ENCODE measurements at regions of chr19 and their contacts with region 1.

Region 1: GRCh38 chr19:55301459-55302317 is 17.9 kb downstream of the BRSK1 start:
- DNase-seq: no peak
- H3K4me3 ChIP-seq: no peak overlapping the region; the same call in 1 of the 2 replicates
- H3K27me3 ChIP-seq: no peaks in the 10 kb centered on the region
- CTCF ChIP-seq: peak; percentile 95

Region 2: DNA sequence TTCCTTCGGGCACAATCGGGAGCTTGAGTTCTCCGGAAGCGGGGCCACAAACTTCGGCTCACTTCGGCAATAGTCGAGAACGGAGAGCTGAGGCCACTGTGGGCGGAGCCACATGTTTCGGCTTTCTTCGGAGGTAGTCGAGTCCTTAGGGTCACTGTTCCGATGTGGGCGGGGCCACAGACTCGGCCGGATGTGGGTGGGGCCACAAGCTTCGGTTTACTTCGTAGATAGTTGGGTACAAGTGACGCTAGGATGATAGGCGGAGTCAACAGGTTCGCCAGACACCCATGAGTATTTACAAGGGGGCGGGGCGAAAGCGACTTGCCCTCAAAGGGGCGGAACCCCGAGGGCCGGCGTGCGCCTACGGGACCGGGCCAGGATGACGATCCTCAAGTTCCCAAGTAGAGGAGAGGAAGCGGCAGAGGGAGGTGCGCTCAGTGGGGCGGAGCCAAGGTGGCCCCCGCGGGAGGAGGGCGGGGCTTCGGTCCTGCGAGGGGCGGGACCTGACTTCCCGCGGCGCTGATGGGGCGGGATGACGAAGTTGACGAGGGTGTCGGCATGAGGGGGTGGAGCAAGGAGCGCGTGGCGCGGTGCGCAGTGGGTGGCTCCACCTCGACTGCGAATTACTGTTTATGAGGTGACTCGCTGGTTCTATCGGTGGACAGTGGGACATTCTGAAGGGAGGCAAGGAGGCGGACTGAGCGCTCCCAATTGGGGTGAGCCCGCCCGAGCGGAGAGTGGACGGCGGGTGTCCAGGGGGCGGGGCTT is 1111.8 kb before region 1 on chr19:
- CTCF ChIA-PET with region 1: no interaction called
- POLR2A ChIA-PET with region 1: no interaction called
- DNase-seq: peak; percentile 99
- H3K4me3 ChIP-seq: peak overlapping the region; percentile 79
- H3K27me3 ChIP-seq: no peaks in the 10 kb centered on the region
- CTCF ChIP-seq: no peak

Region 3: GRCh38 chr19:54882758-54883157 is 418.9 kb before region 1 on chr19:
- CTCF ChIA-PET with region 1: no interaction called
- POLR2A ChIA-PET with region 1: no interaction called
- DNase-seq: no peak
- H3K4me3 ChIP-seq: no peak overlapping the region
- H3K27me3 ChIP-seq: no peaks in the 10 kb centered on the region
- CTCF ChIP-seq: no peak

Region 4: DNA sequence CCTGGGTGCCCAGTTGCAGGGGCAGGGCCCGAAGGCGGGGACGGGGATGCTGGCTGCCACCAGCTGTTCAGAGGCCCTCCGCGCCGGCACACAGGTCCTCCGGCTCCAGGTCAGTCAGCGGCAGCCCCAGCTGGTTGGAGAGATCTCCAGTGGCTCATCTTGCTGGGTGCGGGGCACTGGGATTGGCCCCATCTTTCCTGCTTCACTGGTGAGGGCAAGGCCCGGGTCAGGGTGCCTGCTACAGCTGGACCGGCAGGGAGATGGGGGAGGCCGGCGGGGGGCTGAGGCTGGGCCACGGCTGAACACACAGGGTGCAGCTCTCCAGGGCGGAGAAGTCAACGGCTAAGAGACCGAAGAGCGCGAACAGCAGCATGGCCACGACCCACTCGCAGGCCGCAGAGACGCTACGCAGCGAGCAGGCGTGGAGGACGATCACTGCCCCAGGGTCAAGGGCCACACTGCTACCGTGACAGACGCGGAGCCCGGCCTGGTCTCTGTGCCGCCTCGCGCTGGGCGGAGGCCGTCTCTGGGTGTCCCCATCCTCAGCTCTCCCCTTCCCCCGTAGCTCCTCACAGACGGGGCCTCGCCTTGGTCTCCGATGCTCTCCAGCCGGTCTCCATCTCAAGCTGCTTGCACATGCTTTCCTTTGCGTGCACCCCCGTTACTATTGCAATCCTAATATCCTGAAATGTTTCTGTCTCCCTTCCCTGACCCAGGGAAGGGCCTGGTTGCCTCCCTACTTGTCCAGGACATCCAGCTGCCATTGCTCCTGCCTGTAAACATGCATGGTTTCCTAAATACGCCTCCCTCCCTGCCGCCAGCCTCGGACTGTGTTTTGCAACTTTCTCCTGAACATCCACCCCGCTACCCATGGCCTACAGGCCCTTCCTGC is 11.2 kb after region 1 on chr19:
- CTCF ChIA-PET with region 1: interaction called, 30 read pairs
- POLR2A ChIA-PET with region 1: no interaction called
- DNase-seq: no peak
- H3K4me3 ChIP-seq: no peak overlapping the region
- H3K27me3 ChIP-seq: no peaks in the 10 kb centered on the region
- CTCF ChIP-seq: no peak

Region 5: DNA sequence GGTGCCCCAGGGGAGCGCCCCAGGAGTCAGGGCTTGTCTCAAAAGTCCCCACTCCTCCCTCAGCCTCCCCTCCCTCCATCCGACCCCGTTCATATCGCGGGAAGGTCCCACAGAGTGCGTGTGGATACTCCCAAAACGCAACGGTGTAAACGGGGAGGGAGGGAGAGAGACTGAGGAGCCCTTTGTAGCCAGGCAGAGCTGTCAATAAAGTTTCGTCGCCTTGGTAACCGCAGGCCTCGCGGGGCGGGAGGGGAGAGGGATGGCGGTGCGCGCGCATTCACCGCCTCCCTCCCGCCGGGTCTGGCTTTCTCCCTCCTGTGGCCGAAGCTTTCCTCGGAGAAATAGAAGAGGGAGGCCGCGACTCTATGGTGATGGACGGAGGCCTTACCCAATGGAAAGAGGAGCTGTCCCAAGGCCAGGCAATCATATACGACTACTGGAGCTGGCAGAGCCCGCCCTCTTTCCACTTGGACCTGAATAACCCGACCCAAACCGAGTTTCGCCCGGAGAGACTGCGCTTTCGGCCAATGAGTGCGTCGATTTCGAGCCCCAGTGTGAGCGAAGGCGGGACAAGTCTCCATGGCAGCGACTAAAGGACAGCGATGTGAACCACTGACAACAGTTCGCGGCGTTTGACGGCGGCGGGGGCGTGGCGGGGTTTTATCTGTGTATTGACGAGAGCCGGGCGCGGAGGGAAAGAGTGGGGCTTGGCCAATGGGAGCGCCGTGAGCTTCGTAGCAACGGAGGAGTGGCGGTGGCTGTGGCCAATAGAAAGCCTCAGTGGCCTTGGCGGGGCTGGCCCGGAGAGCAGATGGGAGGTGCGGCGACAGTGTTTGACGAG is 37.6 kb after region 1 on chr19 and contains the start of gene KMT5C:
- CTCF ChIA-PET with region 1: interaction called, 27 read pairs
- POLR2A ChIA-PET with region 1: no interaction called
- DNase-seq: peak; percentile 100
- H3K4me3 ChIP-seq: peak within 1 kb of the TSS; percentile 74
- H3K27me3 ChIP-seq: no peaks in the 10 kb centered on the region; the same call in 1 of the 2 replicates
- CTCF ChIP-seq: peak; percentile 56
- polyA plus RNA-seq, gene KMT5C: 3.7 and 6.4 TPM in 2 replicates

Region 6: GRCh38 chr19:55358943-55359633 is 57.4 kb after region 1 on chr19:
- CTCF ChIA-PET with region 1: no interaction called
- POLR2A ChIA-PET with region 1: no interaction called
- DNase-seq: no peak
- H3K4me3 ChIP-seq: no peak overlapping the region
- H3K27me3 ChIP-seq: peaks cover 15% of the 10 kb centered on the region
- CTCF ChIP-seq: no peak

Region 7: GRCh38 chr19:55385353-55385739 is 83.7 kb after region 1 on chr19:
- CTCF ChIA-PET with region 1: interaction called, 35 read pairs
- POLR2A ChIA-PET with region 1: no interaction called
- DNase-seq: peak; percentile 80
- H3K4me3 ChIP-seq: peak overlapping the region; percentile 94
- H3K27me3 ChIP-seq: no peaks in the 10 kb centered on the region
- CTCF ChIP-seq: no peak

Region 8: DNA sequence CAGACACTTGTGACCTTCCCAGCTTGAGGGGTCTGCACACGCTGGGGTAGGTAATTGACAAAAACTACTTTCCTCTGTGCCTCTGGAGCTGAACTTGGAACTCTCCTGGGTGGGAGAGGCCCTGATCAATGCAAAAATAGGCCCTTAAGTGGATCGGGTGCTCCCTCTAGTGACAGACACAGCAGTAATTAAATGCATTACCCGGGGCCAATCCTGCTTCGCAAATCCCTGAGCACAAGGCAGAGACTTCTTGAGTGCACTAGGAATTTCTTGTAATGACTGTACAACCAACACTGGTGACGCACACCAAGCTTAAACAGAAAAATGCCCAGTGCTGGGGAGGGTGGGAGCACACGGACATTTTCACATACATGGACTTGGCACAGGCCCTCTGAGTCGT is 116.5 kb after region 1 on chr19:
- CTCF ChIA-PET with region 1: interaction called, 10 read pairs
- POLR2A ChIA-PET with region 1: no interaction called
- DNase-seq: peak; percentile 37
- H3K4me3 ChIP-seq: no peak overlapping the region
- H3K27me3 ChIP-seq: no peaks in the 10 kb centered on the region
- CTCF ChIP-seq: peak; percentile 81

Region 9: GRCh38 chr19:55516878-55517620 is 215.4 kb after region 1 on chr19:
- CTCF ChIA-PET with region 1: no interaction called
- POLR2A ChIA-PET with region 1: no interaction called
- DNase-seq: no peak
- H3K4me3 ChIP-seq: peak overlapping the region; percentile 34
- H3K27me3 ChIP-seq: no peaks in the 10 kb centered on the region
- CTCF ChIP-seq: peak; percentile 98